ENCODE measurements at regions of chr5 and their contacts with region 1.

Region 1: GRCh38 chr5:90071066-90071465 is 338.5 kb downstream of the CETN3 start:
- DNase-seq: no peak
- ATAC-seq: no peak
- H3K4me3 ChIP-seq: no peak overlapping the region
- H3K27ac ChIP-seq: no peak overlapping the region
- H3K4me1 ChIP-seq: no peaks in the 10 kb centered on the region
- H3K27me3 ChIP-seq: no peaks in the 10 kb centered on the region
- CTCF ChIP-seq: no peak
- EP300 ChIP-seq: no peak
- POLR2A ChIP-seq: no peak
- RAD21 ChIP-seq: no peak

Region 2: DNA sequence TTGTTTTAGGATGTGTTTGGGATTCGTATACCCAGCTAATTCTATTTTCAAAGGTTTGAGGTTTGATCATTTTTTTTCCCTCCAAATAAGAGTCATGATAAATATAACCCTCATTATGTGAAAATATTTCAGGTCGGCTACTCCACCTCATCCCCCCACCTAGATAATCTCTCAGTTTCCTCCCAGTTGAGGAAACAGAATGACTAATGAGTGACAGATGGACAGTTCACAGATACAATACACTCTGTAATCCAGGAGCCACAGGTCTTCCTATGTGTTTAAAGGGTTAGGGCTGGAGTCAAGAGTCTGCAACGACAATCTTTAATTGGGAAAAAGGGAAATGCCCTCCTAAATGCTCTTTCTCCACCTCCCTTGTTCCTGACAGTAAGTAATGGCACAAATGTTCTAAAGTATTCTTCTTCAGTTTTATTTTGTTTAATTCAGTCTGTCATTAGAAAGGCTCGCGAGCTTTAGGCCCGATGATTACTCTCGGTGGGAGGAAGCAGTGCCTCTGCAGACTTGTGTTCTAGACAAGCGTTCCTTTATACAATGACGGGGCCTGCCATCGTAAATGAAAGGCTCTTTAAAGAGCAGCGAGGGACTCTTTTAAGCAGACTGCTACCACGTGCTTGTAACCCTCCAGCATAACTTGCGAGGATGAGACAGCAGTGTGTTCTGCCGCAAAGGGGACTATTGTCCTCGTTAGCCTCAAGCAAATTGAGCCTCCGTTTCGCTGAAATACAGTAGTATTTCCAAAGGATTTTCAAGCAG is 1257.1 kb before region 1 on chr5:
- CTCF ChIA-PET with region 1: no interaction called
- POLR2A ChIA-PET with region 1: no interaction called
- RAD21 ChIA-PET with region 1: no interaction called
- SMC1A ChIA-PET with region 1: no interaction called
- in situ Hi-C with region 1: no loop called
- intact Hi-C with region 1: no loop called
- DNase-seq: no peak
- ATAC-seq: peak; percentile 11; the same call in 2 of the 3 replicates
- H3K4me3 ChIP-seq: 0 out of 2 replicates have a peak overlapping the region, but pooled peaks have one; percentile 10
- H3K27ac ChIP-seq: no peak overlapping the region; the same call in 1 of the 2 replicates
- H3K4me1 ChIP-seq: peaks cover 29% of the 10 kb centered on the region
- H3K27me3 ChIP-seq: no peaks in the 10 kb centered on the region
- CTCF ChIP-seq: no peak
- EP300 ChIP-seq: no peak
- POLR2A ChIP-seq: no peak
- RAD21 ChIP-seq: no peak

Region 3: DNA sequence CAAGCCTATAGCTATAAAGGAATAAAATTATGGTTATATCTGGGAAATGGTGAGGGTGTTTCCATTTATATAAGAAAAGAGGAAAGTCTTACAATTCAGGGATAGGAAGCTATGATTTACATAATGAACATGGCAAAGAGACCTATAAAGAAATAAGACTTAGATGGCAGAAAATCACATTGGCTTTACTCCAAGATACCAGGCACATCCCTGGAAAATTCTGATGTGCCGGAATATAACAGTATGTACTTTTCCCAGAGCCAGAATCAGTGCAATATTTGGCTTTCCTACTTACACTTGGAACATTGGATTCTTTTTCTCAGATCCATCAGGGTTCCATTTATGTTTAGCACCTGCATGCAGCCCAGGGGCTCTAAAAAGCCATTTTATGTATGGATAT is 19.3 kb before region 1 on chr5:
- CTCF ChIA-PET with region 1: no interaction called
- POLR2A ChIA-PET with region 1: no interaction called
- RAD21 ChIA-PET with region 1: no interaction called
- SMC1A ChIA-PET with region 1: no interaction called
- in situ Hi-C with region 1: no loop called
- intact Hi-C with region 1: loop called (anchors 2 kb)
- DNase-seq: no peak
- ATAC-seq: no peak
- H3K4me3 ChIP-seq: no peak overlapping the region
- H3K27ac ChIP-seq: no peak overlapping the region
- H3K4me1 ChIP-seq: no peaks in the 10 kb centered on the region
- H3K27me3 ChIP-seq: no peaks in the 10 kb centered on the region
- CTCF ChIP-seq: no peak
- EP300 ChIP-seq: no peak
- POLR2A ChIP-seq: no peak
- RAD21 ChIP-seq: no peak